Mammary epithelial cell (primary cell): ENCODE measurements at regions of chr1 and their contacts with region 1.

Region 1: GRCh38 chr1:33295450-33296081 is 25.3 kb downstream of the A3GALT2 start:
- DNase-seq: peak; percentile 76
- H3K4me3 ChIP-seq: no peak overlapping the region
- H3K27ac ChIP-seq: no peak overlapping the region
- H3K4me1 ChIP-seq: no peaks in the 10 kb centered on the region
- H3K27me3 ChIP-seq: no peaks in the 10 kb centered on the region
- CTCF ChIP-seq: peak; percentile 94 to 97

Region 2: DNA sequence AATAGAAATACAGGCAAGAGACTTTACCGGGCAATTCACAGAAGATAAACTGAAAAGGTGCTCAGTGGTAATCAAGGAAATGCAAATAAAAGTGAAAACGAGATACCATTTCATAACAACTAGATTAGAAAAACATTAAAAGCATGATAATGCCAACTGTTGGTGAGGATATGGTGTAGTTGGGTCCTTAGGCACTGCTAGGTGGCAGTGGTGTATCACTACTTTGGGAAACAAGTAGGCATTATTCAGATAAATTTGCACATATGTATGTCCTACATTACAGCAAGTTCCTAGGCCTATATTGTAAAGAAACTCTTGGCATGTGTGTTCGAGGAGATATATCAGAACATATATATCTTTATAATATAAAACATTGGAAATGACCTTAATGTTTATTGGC is 183.6 kb before region 1 on chr1:
- CTCF ChIA-PET with region 1: no interaction called
- dilution Hi-C with region 1: no loop called
- in situ Hi-C with region 1: no loop called
- intact Hi-C with region 1: loop called (anchors 1 kb)
- DNase-seq: peak; percentile 26
- H3K4me3 ChIP-seq: no peak overlapping the region
- H3K27ac ChIP-seq: no peak overlapping the region
- H3K4me1 ChIP-seq: no peaks in the 10 kb centered on the region
- H3K27me3 ChIP-seq: no peaks in the 10 kb centered on the region
- CTCF ChIP-seq: peak; percentile 48 to 62

Region 3: GRCh38 chr1:33616773-33617172 is 321.2 kb after region 1 on chr1:
- CTCF ChIA-PET with region 1: no interaction called
- dilution Hi-C with region 1: no loop called
- in situ Hi-C with region 1: loop called (anchors 25 kb)
- intact Hi-C with region 1: loop called (anchors 1 kb)
- DNase-seq: no peak
- H3K4me3 ChIP-seq: no peak overlapping the region
- H3K27ac ChIP-seq: no peak overlapping the region
- H3K4me1 ChIP-seq: no peaks in the 10 kb centered on the region
- H3K27me3 ChIP-seq: no peaks in the 10 kb centered on the region
- CTCF ChIP-seq: no peak

Region 4: GRCh38 chr1:33624991-33625870 is 329.7 kb after region 1 on chr1:
- CTCF ChIA-PET with region 1: no interaction called
- dilution Hi-C with region 1: no loop called
- in situ Hi-C with region 1: loop called (anchors 25 kb)
- intact Hi-C with region 1: no loop called
- DNase-seq: no peak
- H3K4me3 ChIP-seq: no peak overlapping the region
- H3K27ac ChIP-seq: no peak overlapping the region
- H3K4me1 ChIP-seq: no peaks in the 10 kb centered on the region
- H3K27me3 ChIP-seq: peaks cover 4% of the 10 kb centered on the region
- CTCF ChIP-seq: peak; percentile 7 to 18